ENCODE measurements at regions of chr2 and their contacts with region 1.

Region 1: DNA sequence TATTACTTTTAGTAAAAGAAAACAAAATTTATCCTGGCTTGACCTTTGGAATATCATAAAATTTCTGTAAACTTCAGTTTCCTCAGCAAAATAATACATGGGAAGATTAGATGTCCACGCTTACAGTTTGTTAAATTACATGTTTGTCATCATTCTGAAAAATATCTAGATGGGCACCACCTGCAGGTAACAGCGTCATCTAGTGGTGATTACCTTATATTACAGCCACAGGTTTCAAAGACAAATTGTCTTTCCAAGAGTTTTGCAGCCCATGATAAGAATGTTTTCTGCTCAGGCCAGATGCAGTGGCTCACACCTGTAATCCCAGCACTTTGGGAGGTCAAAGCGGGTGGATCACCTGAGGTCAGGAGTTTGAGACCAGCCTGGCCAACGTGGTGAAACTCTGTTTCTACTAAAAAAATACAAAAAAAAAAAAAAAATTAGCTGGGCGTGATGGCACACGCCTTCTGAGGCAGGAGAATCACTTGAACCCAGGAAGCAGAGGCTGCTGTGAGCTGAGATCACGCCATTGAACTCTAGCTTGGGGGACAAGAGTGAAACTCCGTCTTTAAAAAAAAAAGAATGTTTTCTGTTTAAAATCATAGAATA is 96.3 kb upstream of the RASGRP3 start:
- DNase-seq: no peak
- ATAC-seq: no peak
- H3K4me3 ChIP-seq: no peak overlapping the region
- H3K27ac ChIP-seq: no peak overlapping the region
- H3K4me1 ChIP-seq: no peaks in the 10 kb centered on the region
- H3K27me3 ChIP-seq: peaks cover 0 to 11% of the 10 kb centered on the region in 2 experiments; a peak in 2 of 5 replicates
- CTCF ChIP-seq: peak; percentile 65
- EP300 ChIP-seq: no peak
- POLR2A ChIP-seq: no peak
- RAD21 ChIP-seq: no peak; the same call in 1 of the 2 replicates

Region 2: GRCh38 chr2:33441235-33441810 is 61.2 kb after region 1 on chr2:
- CTCF ChIA-PET with region 1: no interaction called
- POLR2A ChIA-PET with region 1: no interaction called
- in situ Hi-C with region 1: no loop called
- intact Hi-C with region 1: loop called (anchors 5 kb)
- DNase-seq: peak; percentile 34
- ATAC-seq: peak; percentile 97
- H3K4me3 ChIP-seq: no peak overlapping the region
- H3K27ac ChIP-seq: no peak overlapping the region
- H3K4me1 ChIP-seq: 0 out of 2 replicates have a peak, but pooled peaks cover 6% of the 10 kb centered on the region
- H3K27me3 ChIP-seq: peaks cover 0 to 5% of the 10 kb centered on the region in 2 experiments; a peak in 1 of 5 replicates
- CTCF ChIP-seq: peak; percentile 73
- EP300 ChIP-seq: no peak
- POLR2A ChIP-seq: no peak
- RAD21 ChIP-seq: peak; percentile 65; the same call in 1 of the 2 replicates